Common myeloid progenitor, CD34-positive (primary cell): ENCODE measurements at regions of chr12 and their contacts with region 1.

Region 1: DNA sequence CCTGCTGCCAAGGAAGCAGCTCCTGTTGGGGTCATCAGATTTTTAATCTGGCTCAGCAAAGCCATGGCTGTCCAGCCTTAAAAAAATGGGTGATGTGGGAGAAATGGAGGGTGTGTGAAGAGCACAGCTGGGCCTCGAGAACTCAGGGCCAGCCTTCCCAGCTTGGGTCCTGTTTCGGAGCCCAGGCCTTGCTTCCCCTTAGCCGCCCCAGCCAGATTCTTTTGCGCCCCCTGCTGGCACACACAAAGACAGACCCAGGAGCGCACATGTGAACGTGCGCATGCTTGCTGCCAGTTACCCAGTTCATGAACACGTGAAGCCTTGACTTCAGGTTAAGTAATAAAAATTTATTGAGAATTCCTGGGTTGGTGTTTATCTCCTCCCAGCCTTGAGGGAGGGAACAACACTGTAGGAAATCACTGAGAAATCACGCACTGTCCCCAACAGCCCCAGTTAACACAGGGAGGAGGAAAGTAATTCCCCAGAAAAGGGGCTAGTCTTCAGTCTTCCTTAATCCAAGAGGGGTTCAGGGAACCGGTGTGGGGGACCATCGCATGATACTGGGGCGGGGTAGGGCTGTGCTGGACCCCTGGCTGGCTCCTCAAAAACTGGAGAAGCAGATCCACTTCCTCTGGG is 5.3 kb downstream of the PHB2 start:
- DNase-seq: peak; percentile 89 to 94 (median 91)
- H3K4me3 ChIP-seq: no peak overlapping the region
- H3K27ac ChIP-seq: peak overlapping the region in 1 of 2 experiments; percentile 50
- H3K4me1 ChIP-seq: peaks cover 2 to 64% (median 54%) of the 10 kb centered on the region in 4 experiments
- H3K27me3 ChIP-seq: no peaks in the 10 kb centered on the region

Region 2: DNA sequence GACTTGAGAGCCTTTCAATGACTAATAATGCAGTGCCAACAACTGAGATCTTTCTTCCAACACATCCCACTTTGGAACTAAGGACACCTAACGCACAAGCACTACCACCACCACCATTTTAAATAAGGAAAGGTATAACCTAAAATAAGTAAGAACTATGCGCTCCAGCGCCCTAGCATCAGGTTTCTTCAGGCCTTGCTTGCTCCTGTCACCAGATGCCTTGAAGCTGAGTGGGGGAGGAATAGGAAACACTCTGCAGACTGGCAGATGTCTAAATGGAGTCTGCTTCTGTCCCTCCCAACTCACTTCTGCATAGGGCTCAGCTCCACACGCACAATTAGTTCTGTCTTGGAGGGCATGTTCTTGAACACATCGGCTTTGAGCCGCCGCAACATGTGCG is 373.1 kb before region 1 on chr12:
- CTCF ChIA-PET with region 1: no interaction called
- POLR2A ChIA-PET with region 1: no interaction called
- DNase-seq: no peak
- H3K4me3 ChIP-seq: no peak overlapping the region
- H3K27ac ChIP-seq: no peak overlapping the region
- H3K4me1 ChIP-seq: no peaks in the 10 kb centered on the region
- H3K27me3 ChIP-seq: no peaks in the 10 kb centered on the region

Region 3: GRCh38 chr12:6937481-6938297 is 27.5 kb before region 1 on chr12:
- CTCF ChIA-PET with region 1: interaction called, 441 read pairs
- POLR2A ChIA-PET with region 1: interaction called, 42 read pairs
- DNase-seq: peak; percentile 95 to 98 (median 98)
- H3K4me3 ChIP-seq: peak overlapping the region; percentile 15 to 87 (median 81)
- H3K27ac ChIP-seq: peak overlapping the region; percentile 74 to 86
- H3K4me1 ChIP-seq: peaks cover 0 to 32% (median 28%) of the 10 kb centered on the region in 4 experiments
- H3K27me3 ChIP-seq: no peaks in the 10 kb centered on the region

Region 4: DNA sequence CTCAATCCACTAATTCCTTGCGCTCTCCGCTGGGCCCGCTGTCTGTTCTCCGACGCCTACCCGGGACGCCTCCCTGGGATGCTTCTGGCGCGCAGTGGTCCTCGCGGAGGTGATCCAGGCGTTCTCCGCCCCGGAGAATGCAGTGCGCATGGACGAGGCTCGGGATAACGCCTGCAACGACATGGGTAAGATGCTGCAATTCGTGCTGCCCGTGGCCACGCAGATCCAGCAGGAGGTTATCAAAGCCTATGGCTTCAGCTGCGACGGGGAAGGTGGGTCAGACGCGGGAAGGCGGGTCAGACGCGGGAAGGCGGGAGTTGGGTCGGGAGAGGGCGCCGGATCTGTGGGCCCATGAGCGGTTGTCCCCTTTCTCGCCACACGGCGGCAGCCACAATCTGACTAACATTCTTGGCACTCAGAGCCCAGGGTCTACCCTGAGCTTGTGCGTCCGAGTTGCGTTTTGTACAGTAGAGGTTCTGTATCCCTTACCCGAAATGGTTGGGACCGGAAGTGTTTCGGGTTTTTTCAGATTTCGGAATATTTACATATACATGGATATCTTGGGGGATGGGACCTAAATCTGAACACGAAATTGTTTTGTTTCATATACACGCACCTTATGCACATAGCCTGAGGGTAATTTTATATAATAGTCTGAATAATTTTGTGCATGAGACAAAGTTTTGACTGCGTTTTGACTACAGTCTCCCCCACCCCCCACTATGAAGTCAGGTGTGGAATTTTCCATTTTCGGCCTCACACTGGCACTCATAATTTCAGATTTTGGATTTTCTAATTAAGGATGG is 20.6 kb before region 1 on chr12:
- CTCF ChIA-PET with region 1: interaction called, 441 read pairs
- POLR2A ChIA-PET with region 1: interaction called, 42 read pairs
- DNase-seq: peak; percentile 90 to 94 (median 93)
- H3K4me3 ChIP-seq: peak overlapping the region; percentile 41 to 89 (median 71)
- H3K27ac ChIP-seq: peak overlapping the region; percentile 97 to 99
- H3K4me1 ChIP-seq: peaks cover 3 to 53% (median 48%) of the 10 kb centered on the region in 4 experiments
- H3K27me3 ChIP-seq: no peaks in the 10 kb centered on the region

Region 5: GRCh38 chr12:6953442-6954315 is 11.5 kb before region 1 on chr12:
- CTCF ChIA-PET with region 1: interaction called, 441 read pairs
- POLR2A ChIA-PET with region 1: interaction called, 17 read pairs
- DNase-seq: peak; percentile 88 to 94 (median 93)
- H3K4me3 ChIP-seq: peak overlapping the region; percentile 75 to 96 (median 87)
- H3K27ac ChIP-seq: peak overlapping the region; percentile 48 to 84
- H3K4me1 ChIP-seq: peaks cover 22 to 91% (median 87%) of the 10 kb centered on the region in 4 experiments
- H3K27me3 ChIP-seq: no peaks in the 10 kb centered on the region

Region 6: GRCh38 chr12:7038591-7038990 is 73.4 kb after region 1 on chr12:
- CTCF ChIA-PET with region 1: no interaction called
- POLR2A ChIA-PET with region 1: no interaction called
- DNase-seq: no peak
- H3K4me3 ChIP-seq: no peak overlapping the region
- H3K27ac ChIP-seq: no peak overlapping the region
- H3K4me1 ChIP-seq: peaks cover 0 to 6% (median 3%) of the 10 kb centered on the region in 4 experiments
- H3K27me3 ChIP-seq: no peaks in the 10 kb centered on the region